ENCODE measurements at regions of chr6 and their contacts with region 1.

Region 1: DNA sequence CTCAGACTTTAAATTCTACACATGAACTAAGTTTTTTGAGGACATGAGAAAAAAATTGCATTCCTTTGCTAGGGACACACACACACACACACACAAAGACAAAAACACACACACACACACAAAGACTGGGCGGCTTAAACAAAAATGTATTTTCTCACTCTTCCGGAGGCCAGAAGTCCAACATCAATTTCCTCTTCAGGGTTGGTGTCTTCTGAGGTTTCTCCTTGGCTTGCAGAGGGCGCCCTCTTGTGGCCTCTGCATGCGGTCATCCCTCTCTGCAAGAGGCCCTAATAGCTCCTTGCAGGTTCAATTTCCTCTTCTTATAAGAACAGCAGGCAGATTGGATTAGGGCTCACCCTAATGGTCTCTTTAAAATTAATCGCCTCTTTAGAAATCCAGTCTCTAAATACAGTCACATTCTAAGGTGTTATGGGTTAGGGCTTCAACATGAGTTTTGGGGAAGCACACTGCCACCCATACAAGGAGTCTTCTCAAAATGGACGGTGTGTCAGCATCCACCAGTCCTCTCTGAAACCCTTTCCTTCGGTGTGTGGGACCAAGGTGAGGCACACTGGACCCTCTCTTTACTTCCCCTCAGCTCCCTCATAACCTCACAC is 61.4 kb downstream of the GPR6 start:
- DNase-seq: peak; percentile 56 to 89 (median 73)
- ATAC-seq: peak; percentile 82 to 85 (median 83)
- H3K4me3 ChIP-seq: peak overlapping the region; percentile 48 to 68
- H3K4me3 Mint-ChIP-seq: peak overlapping the region; percentile 77 to 90 (median 88)
- H3K27ac ChIP-seq: peak overlapping the region; percentile 80
- H3K27ac Mint-ChIP-seq: peak overlapping the region; percentile 97 to 98
- H3K4me1 ChIP-seq: peaks cover 0 to 17% of the 10 kb centered on the region in 2 experiments
- H3K4me1 Mint-ChIP-seq: peaks cover 10 to 16% (median 15%) of the 10 kb centered on the region in 3 donors
- H3K27me3 ChIP-seq: no peaks in the 10 kb centered on the region
- H3K27me3 Mint-ChIP-seq: no peaks in the 10 kb centered on the region

Region 2: GRCh38 chr6:109187399-109188114 is 851.9 kb before region 1 on chr6:
- CTCF ChIA-PET with region 1: interaction called, 8 to 30 read pairs
- POLR2A ChIA-PET with region 1: no interaction called
- DNase-seq: peak; percentile 20 to 79 (median 53)
- ATAC-seq: peak; percentile 81 to 87 (median 84)
- H3K4me3 ChIP-seq: no peak overlapping the region
- H3K4me3 Mint-ChIP-seq: no peak overlapping the region
- H3K27ac ChIP-seq: no peak overlapping the region
- H3K27ac Mint-ChIP-seq: no peak overlapping the region
- H3K4me1 ChIP-seq: no peaks in the 10 kb centered on the region
- H3K4me1 Mint-ChIP-seq: no peaks in the 10 kb centered on the region
- H3K27me3 ChIP-seq: no peaks in the 10 kb centered on the region
- H3K27me3 Mint-ChIP-seq: peaks cover 10 to 25% of the 10 kb centered on the region in 2 donors

Region 3: DNA sequence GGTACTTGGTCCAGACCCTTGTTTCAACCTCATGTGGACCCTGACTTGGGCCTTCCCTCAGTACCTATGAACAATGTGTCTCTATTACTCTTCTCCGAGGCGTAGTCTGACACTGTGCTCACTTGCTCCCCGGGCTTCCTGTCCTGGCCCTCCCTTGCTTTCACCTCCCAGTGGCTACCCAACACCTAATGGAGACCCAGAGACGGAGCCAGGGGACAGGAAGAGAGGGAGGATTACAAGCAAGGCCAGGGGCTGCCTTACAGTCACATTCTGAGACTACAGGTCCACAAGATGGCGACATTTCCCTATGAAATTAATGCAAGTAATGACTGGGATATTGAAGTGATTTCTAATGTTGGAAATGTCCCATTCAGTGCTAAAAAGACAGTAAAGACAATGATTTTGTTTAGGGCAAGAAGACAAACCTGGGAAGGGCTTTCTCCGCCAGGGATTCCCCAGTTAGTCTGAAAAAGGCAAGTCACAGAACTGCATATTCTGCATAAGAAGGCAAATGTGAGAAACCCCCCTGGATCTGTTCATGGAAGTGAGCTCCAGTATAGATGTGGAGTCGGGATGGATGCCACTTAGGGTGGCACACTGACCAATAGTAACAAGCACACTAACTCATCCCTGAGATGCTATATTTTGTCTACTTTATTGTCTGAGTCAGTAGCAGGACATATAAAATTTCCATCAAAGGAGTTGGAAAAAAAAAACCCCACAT is 512.4 kb before region 1 on chr6:
- CTCF ChIA-PET with region 1: interaction called, 16 to 26 read pairs
- POLR2A ChIA-PET with region 1: interaction called in 1 of 2 experiments, 3 read pairs
- DNase-seq: peak in 33 of 35 experiments; percentile 3 to 76 (median 27)
- ATAC-seq: peak; percentile 54 to 79 (median 73)
- H3K4me3 ChIP-seq: no peak overlapping the region
- H3K4me3 Mint-ChIP-seq: no peak overlapping the region
- H3K27ac ChIP-seq: no peak overlapping the region
- H3K27ac Mint-ChIP-seq: no peak overlapping the region
- H3K4me1 ChIP-seq: no peaks in the 10 kb centered on the region
- H3K4me1 Mint-ChIP-seq: no peaks in the 10 kb centered on the region
- H3K27me3 ChIP-seq: no peaks in the 10 kb centered on the region
- H3K27me3 Mint-ChIP-seq: no peaks in the 10 kb centered on the region

Region 4: GRCh38 chr6:110029144-110029543 is 10.3 kb before region 1 on chr6:
- CTCF ChIA-PET with region 1: interaction called, 5 to 11 read pairs
- POLR2A ChIA-PET with region 1: interaction called, 3 read pairs
- DNase-seq: no peak
- ATAC-seq: no peak
- H3K4me3 ChIP-seq: no peak overlapping the region
- H3K4me3 Mint-ChIP-seq: no peak overlapping the region
- H3K27ac ChIP-seq: no peak overlapping the region
- H3K27ac Mint-ChIP-seq: no peak overlapping the region
- H3K4me1 ChIP-seq: no peaks in the 10 kb centered on the region
- H3K4me1 Mint-ChIP-seq: no peaks in the 10 kb centered on the region
- H3K27me3 ChIP-seq: no peaks in the 10 kb centered on the region
- H3K27me3 Mint-ChIP-seq: no peaks in the 10 kb centered on the region

Region 5: GRCh38 chr6:110125361-110125760 is 85.9 kb after region 1 on chr6:
- CTCF ChIA-PET with region 1: no interaction called
- POLR2A ChIA-PET with region 1: no interaction called
- DNase-seq: no peak
- ATAC-seq: no peak
- H3K4me3 ChIP-seq: no peak overlapping the region
- H3K4me3 Mint-ChIP-seq: no peak overlapping the region
- H3K27ac ChIP-seq: no peak overlapping the region
- H3K27ac Mint-ChIP-seq: no peak overlapping the region
- H3K4me1 ChIP-seq: no peaks in the 10 kb centered on the region
- H3K4me1 Mint-ChIP-seq: no peaks in the 10 kb centered on the region
- H3K27me3 ChIP-seq: no peaks in the 10 kb centered on the region
- H3K27me3 Mint-ChIP-seq: no peaks in the 10 kb centered on the region

Region 6: DNA sequence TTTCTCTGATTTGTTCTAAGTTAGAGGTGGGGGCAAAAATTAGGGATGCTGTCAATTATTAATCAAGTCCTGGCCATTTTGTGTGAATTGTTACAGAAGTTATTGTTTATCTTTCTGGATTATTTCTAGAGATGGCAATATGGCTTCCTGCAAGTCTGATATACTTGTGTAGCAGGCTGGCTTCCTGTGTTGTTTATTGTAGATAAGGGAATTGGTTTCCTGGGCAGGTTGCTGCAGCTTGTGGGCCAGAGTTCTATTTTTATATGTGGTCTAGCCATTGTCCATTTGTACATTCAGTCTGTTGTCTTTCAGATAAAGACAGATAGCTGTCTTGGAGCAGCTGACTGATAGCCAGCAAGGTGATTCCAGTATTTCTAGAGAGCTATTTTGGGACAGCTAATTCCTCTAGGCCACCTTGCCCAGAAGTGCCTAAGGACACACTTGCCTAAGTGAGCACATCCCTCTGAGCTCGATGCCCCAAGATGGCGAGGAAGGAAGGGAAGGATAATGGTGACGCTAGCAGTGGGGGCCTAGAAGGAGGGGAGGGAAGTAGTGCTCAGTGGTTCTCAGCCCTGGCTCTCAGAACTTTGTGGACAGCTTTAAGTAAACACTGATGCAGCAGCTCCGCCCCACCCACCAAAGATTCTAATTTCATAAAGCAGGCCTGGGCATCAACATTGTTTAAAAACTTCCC is 350.4 kb after region 1 on chr6:
- CTCF ChIA-PET with region 1: interaction called, 12 to 44 read pairs
- POLR2A ChIA-PET with region 1: interaction called in 1 of 2 experiments, 12 read pairs
- DNase-seq: peak in 2 of 35 experiments; percentile 4 to 9
- ATAC-seq: peak in 2 of 4 experiments; percentile 26 to 49
- H3K4me3 ChIP-seq: no peak overlapping the region
- H3K4me3 Mint-ChIP-seq: peak overlapping the region in 1 of 3 donors; percentile 58
- H3K27ac ChIP-seq: peak overlapping the region; percentile 6
- H3K27ac Mint-ChIP-seq: peak overlapping the region; percentile 74 to 91
- H3K4me1 ChIP-seq: peaks cover 9 to 21% of the 10 kb centered on the region in 2 experiments
- H3K4me1 Mint-ChIP-seq: peaks cover 20 to 26% (median 22%) of the 10 kb centered on the region in 3 donors
- H3K27me3 ChIP-seq: no peaks in the 10 kb centered on the region
- H3K27me3 Mint-ChIP-seq: peaks cover 0 to 4% of the 10 kb centered on the region in 2 donors

Measured in T-cell (primary cell).